GM12878 (cell line): ENCODE measurements at regions of chr2 and their contacts with region 1.

Region 1: GRCh38 chr2:71068218-71069035 is at the start of gene NAGK:
- DNase-seq: peak; percentile 91
- ATAC-seq: peak; percentile 63
- H3K4me3 ChIP-seq: peak within 1 kb of the TSS; percentile 70
- H3K27ac ChIP-seq: peak within 1 kb of the TSS; percentile 90
- H3K4me1 ChIP-seq: peaks cover 51% of the 10 kb centered on the region
- H3K27me3 ChIP-seq: no peaks in the 10 kb centered on the region
- CTCF ChIP-seq: 0 out of 6 replicates have a peak, but pooled peaks of 1 of the 3 experiments have one; percentile 3
- EP300 ChIP-seq: 0 out of 4 replicates have a peak, but pooled peaks of 1 of the 2 experiments have one; percentile 6
- POLR2A ChIP-seq: peak; percentile 100
- RAD21 ChIP-seq: no peak
- polyA plus RNA-seq, gene NAGK: 67.8 to 72.5 TPM

Region 2: GRCh38 chr2:70104231-70105111 is 964.0 kb before region 1 on chr2:
- CTCF ChIA-PET with region 1: no interaction called
- POLR2A ChIA-PET with region 1: no interaction called
- RAD21 ChIA-PET with region 1: no interaction called
- SMC1A ChIA-PET with region 1: no interaction called
- in situ Hi-C with region 1: no loop called
- intact Hi-C with region 1: loop called (anchors 10 kb)
- DNase-seq: no peak
- ATAC-seq: peak; percentile 17; the same call in 2 of the 3 replicates
- H3K4me3 ChIP-seq: peak overlapping the region; percentile 53
- H3K27ac ChIP-seq: peak overlapping the region; percentile 97
- H3K4me1 ChIP-seq: peaks cover 38% of the 10 kb centered on the region
- H3K27me3 ChIP-seq: no peaks in the 10 kb centered on the region
- CTCF ChIP-seq: no peak
- EP300 ChIP-seq: no peak
- POLR2A ChIP-seq: no peak
- RAD21 ChIP-seq: 0 out of 2 replicates have a peak, but pooled peaks have one; percentile 3

Region 3: GRCh38 chr2:70935468-70936164 is 132.8 kb before region 1 on chr2 and contains the start of gene ATP6V1B1:
- CTCF ChIA-PET with region 1: no interaction called
- POLR2A ChIA-PET with region 1: no interaction called
- RAD21 ChIA-PET with region 1: no interaction called
- SMC1A ChIA-PET with region 1: no interaction called
- in situ Hi-C with region 1: no loop called
- intact Hi-C with region 1: no loop called
- DNase-seq: no peak
- ATAC-seq: no peak
- H3K4me3 ChIP-seq: no peak within 1 kb of the TSS
- H3K27ac ChIP-seq: no peak within 1 kb of the TSS
- H3K4me1 ChIP-seq: no peaks in the 10 kb centered on the region
- H3K27me3 ChIP-seq: peaks cover 0 to 5% of the 10 kb centered on the region in 2 experiments; a peak in 2 of 4 replicates
- CTCF ChIP-seq: no peak
- EP300 ChIP-seq: no peak
- POLR2A ChIP-seq: no peak
- RAD21 ChIP-seq: no peak
- polyA plus RNA-seq, gene ATP6V1B1: not detected

Region 4: DNA sequence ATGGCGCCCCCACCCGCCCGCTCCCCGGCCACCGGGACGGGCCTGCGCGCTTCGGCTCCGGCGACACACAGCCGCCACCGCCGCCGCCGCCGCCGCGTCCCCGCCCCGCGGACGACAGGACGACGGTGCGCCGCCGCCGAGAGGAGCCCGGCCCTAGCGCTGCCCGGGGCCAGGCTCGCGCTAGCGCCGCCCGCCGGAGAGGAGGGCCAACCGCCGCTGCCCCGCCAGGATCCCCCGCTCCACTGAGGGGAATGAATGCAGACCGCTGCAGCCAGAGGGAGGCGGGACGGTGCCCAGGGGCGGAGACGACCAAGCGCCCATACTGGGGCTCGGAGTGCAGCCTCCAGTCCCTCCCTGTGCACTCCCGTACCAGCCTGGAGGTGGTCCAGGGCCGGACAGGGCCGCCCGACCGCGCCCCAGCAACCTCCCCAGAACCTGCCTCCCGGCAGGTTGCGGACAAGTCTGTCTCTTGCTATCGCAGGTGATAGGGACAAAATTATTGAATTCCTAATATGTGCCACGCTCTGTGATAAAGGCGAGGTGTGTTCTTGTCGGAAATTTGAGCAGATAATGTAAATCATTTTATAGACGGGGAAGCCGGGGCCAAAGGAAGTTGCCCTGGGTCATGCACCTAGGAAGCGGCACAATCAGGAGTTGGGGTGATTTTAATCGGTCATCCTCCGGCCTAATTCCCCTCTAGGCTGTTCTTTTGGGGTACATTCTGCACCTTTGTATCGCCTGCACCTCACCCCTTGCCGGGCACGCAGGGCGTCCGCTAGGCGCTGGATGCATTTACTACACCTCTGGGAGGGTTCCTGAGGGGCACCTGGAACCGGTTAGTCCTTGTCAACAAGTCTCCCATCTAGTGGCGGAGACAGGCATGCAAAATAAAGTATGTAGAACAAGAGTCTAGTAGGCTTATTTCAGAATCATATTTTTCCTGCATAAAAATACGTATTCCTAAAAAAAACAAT is 73.4 kb before region 1 on chr2 and contains the start of gene TEX261:
- CTCF ChIA-PET with region 1: interaction called, 3 read pairs
- POLR2A ChIA-PET with region 1: interaction called, 3 read pairs
- RAD21 ChIA-PET with region 1: no interaction called
- SMC1A ChIA-PET with region 1: no interaction called
- in situ Hi-C with region 1: no loop called
- intact Hi-C with region 1: loop called (anchors 5 kb)
- DNase-seq: peak; percentile 34
- ATAC-seq: peak; percentile 97
- H3K4me3 ChIP-seq: peak within 1 kb of the TSS; percentile 85
- H3K27ac ChIP-seq: peak within 1 kb of the TSS; percentile 57
- H3K4me1 ChIP-seq: peaks cover 9% of the 10 kb centered on the region
- H3K27me3 ChIP-seq: no peaks in the 10 kb centered on the region
- CTCF ChIP-seq: peak; percentile 73 to 90 (median 75); a peak in 5 of 6 replicates
- EP300 ChIP-seq: no peak
- POLR2A ChIP-seq: peak; percentile 87
- RAD21 ChIP-seq: peak; percentile 26; the same call in 1 of the 2 replicates
- polyA plus RNA-seq, gene TEX261: 5.5 to 11.1 TPM

Region 5: GRCh38 chr2:71018625-71019024 is 49.8 kb before region 1 on chr2:
- CTCF ChIA-PET with region 1: interaction called, 27 read pairs
- POLR2A ChIA-PET with region 1: no interaction called
- RAD21 ChIA-PET with region 1: interaction called, 15 read pairs
- SMC1A ChIA-PET with region 1: interaction called, 8 read pairs
- in situ Hi-C with region 1: no loop called
- intact Hi-C with region 1: no loop called
- DNase-seq: no peak
- ATAC-seq: no peak
- H3K4me3 ChIP-seq: no peak overlapping the region
- H3K27ac ChIP-seq: no peak overlapping the region
- H3K4me1 ChIP-seq: no peaks in the 10 kb centered on the region
- H3K27me3 ChIP-seq: no peaks in the 10 kb centered on the region
- CTCF ChIP-seq: no peak
- EP300 ChIP-seq: no peak
- POLR2A ChIP-seq: no peak
- RAD21 ChIP-seq: no peak

Region 6: DNA sequence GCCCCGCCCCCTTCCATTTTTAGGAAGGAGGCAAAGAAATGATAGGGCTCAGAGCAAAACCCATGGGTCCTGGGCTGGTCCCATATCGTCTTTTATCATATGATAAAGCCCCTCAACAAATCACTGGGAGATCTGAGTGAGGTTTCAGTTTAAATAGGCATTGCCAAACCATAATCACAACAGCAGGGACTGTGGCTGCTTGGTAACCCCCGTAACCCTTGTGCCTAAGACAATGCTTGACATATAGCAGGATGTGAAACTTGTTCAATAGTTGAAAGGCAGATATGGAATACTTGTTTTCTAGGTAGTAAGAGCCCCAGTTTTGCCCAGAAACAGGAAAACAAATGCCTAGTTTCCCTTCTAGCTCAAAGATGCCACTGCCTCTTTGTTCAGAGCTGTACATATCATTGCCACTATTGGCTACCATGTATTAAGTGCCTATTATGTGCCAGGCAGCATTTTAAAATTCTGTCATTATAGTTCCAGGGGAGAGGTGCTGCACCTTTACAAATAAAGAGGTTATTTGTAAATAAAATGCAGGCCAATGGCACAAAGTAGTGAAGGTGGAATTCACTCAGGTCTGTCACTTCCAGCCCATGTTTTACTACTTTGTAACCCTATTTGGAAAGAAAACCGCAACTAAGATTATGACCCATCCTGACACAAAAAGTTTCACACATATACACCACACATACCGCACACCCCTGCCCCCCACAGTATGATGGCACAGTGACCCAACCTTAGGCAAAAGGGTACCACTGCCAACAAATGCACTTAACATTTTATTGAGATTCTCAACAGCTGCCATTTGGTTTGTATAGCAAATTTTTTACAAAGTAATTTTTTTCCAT is 14.2 kb after region 1 on chr2:
- CTCF ChIA-PET with region 1: interaction called, 36 read pairs
- POLR2A ChIA-PET with region 1: interaction called, 5 read pairs
- RAD21 ChIA-PET with region 1: interaction called, 5 read pairs
- SMC1A ChIA-PET with region 1: interaction called, 11 read pairs
- in situ Hi-C with region 1: no loop called
- intact Hi-C with region 1: no loop called
- DNase-seq: no peak
- ATAC-seq: peak; percentile 91
- H3K4me3 ChIP-seq: no peak overlapping the region
- H3K27ac ChIP-seq: peak overlapping the region; percentile 24; the same call in 1 of the 2 replicates
- H3K4me1 ChIP-seq: peaks cover 14% of the 10 kb centered on the region
- H3K27me3 ChIP-seq: no peaks in the 10 kb centered on the region
- CTCF ChIP-seq: no peak
- EP300 ChIP-seq: 0 out of 4 replicates have a peak, but pooled peaks have one; percentile 33 to 40
- POLR2A ChIP-seq: no peak
- RAD21 ChIP-seq: no peak

Region 7: GRCh38 chr2:71130113-71130904 is 61.9 kb after region 1 on chr2 and contains the starts of genes MCEE and MPHOSPH10:
- CTCF ChIA-PET with region 1: interaction called, 23 read pairs
- POLR2A ChIA-PET with region 1: interaction called, 62 read pairs
- RAD21 ChIA-PET with region 1: interaction called, 28 read pairs
- SMC1A ChIA-PET with region 1: interaction called, 40 read pairs
- in situ Hi-C with region 1: no loop called
- intact Hi-C with region 1: loop called (anchors 2 kb)
- DNase-seq: peak; percentile 64
- ATAC-seq: peak; percentile 97
- H3K4me3 ChIP-seq: peak within 1 kb of the TSS; percentile 93
- H3K27ac ChIP-seq: peak within 1 kb of the TSS; percentile 86
- H3K4me1 ChIP-seq: peaks cover 5% of the 10 kb centered on the region; the same call in 1 of the 2 replicates
- H3K27me3 ChIP-seq: no peaks in the 10 kb centered on the region
- CTCF ChIP-seq: no peak
- EP300 ChIP-seq: no peak
- POLR2A ChIP-seq: peak; percentile 90
- RAD21 ChIP-seq: no peak
- polyA plus RNA-seq, gene MCEE: 43.6 to 63.4 TPM
- polyA plus RNA-seq, gene MPHOSPH10: 29.1 to 40.4 TPM

Region 8: GRCh38 chr2:71166812-71167211 is 98.4 kb after region 1 on chr2:
- CTCF ChIA-PET with region 1: no interaction called
- POLR2A ChIA-PET with region 1: no interaction called
- RAD21 ChIA-PET with region 1: no interaction called
- SMC1A ChIA-PET with region 1: no interaction called
- in situ Hi-C with region 1: no loop called
- intact Hi-C with region 1: no loop called
- DNase-seq: no peak
- ATAC-seq: no peak
- H3K4me3 ChIP-seq: no peak overlapping the region
- H3K27ac ChIP-seq: no peak overlapping the region
- H3K4me1 ChIP-seq: no peaks in the 10 kb centered on the region
- H3K27me3 ChIP-seq: no peaks in the 10 kb centered on the region
- CTCF ChIP-seq: no peak
- EP300 ChIP-seq: no peak
- POLR2A ChIP-seq: no peak
- RAD21 ChIP-seq: no peak

Region 9: DNA sequence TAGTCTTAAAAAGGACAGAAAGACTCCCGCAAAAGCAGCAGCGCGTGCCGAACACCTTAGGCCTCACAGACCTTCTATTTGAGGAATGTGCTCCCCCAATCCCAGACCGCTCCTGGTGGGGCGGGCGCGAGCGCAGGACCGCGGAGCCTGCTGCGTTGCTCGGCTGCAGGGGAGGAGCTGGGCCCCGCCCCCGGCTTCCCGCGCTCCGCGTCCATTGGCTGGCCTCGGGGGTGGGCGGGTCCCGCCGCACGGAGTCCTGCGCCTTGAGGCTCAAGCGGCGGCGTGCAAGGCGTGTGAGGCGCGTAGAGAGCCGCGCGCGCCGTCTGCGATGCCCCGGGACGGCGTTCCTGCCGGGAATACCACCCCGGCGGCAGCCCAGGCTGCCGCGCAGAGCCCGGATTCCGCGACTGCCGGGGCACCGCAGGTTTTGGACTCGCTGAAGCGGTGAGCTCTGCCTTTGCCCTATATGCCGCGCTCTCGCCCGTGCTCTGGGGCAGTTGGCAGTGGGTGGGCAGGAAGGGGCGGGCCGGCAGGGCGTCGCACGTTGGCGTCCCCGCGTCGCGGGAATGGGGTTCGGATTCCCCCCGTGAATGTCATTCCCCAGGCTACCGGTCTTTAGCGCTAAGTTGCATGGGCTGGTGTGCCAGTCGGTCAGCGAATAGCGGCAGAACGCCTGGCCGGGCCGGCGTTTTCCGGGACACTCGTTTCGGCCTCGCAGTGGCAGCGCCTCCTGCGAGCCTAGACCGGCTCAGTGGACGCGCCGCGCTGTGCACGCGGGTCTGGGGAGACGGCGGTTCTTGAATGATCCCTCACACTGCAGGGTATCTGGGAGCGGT is 208.1 kb after region 1 on chr2:
- CTCF ChIA-PET with region 1: no interaction called
- POLR2A ChIA-PET with region 1: interaction called, 3 read pairs
- RAD21 ChIA-PET with region 1: no interaction called
- SMC1A ChIA-PET with region 1: no interaction called
- in situ Hi-C with region 1: no loop called
- intact Hi-C with region 1: loop called (anchors 5 kb)
- DNase-seq: peak; percentile 45
- ATAC-seq: peak; percentile 98
- H3K4me3 ChIP-seq: peak overlapping the region; percentile 78
- H3K27ac ChIP-seq: no peak overlapping the region
- H3K4me1 ChIP-seq: no peaks in the 10 kb centered on the region
- H3K27me3 ChIP-seq: no peaks in the 10 kb centered on the region
- CTCF ChIP-seq: no peak
- EP300 ChIP-seq: no peak
- POLR2A ChIP-seq: peak; percentile 66
- RAD21 ChIP-seq: no peak